HCT116 (cell line): ENCODE measurements at regions of chr5 and their contacts with region 1.

Region 1: GRCh38 chr5:35003018-35003957 is 44.5 kb downstream of the AGXT2 start:
- DNase-seq: peak; percentile 29
- ATAC-seq: peak; percentile 86
- H3K4me3 ChIP-seq: no peak overlapping the region
- H3K27ac ChIP-seq: no peak overlapping the region
- H3K4me1 ChIP-seq: no peaks in the 10 kb centered on the region; a peak in 1 of 4 replicates
- H3K27me3 ChIP-seq: 0 out of 2 replicates have a peak, but pooled peaks cover 15% of the 10 kb centered on the region
- CTCF ChIP-seq: peak; percentile 63 to 92 (median 91); a peak in 5 of 6 replicates
- POLR2A ChIP-seq: no peak
- RAD21 ChIP-seq: peak; percentile 77

Region 2: DNA sequence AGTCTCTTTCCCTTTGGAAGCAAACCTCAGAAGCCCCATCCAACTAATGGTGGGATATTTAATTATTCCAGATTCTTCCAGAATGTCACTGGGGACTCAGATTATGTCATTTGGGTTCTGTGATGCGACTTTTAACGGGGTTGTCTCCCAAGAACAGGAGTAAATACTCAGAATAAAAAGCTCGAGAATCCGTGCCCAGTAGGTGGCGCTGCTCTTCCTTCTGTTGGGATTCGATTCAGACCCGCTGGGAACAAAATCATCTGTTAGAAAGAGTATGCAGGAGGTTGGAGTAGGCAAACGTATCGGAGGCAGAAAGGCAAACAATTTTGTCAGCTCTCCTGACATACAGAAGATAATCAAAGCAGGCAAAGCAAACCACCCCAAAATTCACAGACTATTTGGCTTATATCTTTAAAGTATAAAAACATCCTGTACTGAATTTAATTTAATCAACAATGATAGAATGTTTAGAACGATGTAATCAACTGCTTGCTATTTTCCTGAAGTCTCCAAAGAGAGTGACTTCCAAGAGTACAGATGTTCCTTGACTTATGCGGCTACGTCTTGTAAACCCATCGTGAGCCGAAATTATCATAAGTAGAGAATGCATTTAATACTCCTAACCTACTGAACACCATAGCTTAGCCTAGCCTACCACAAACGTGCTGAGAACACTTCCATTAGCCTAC is 517.0 kb before region 1 on chr5:
- CTCF ChIA-PET with region 1: interaction called, 9 read pairs
- POLR2A ChIA-PET with region 1: no interaction called
- RAD21 ChIA-PET with region 1: no interaction called
- intact Hi-C with region 1: loop called (anchors 1 kb)
- DNase-seq: peak; percentile 69
- ATAC-seq: peak; percentile 88
- H3K4me3 ChIP-seq: no peak overlapping the region
- H3K27ac ChIP-seq: no peak overlapping the region
- H3K4me1 ChIP-seq: no peaks in the 10 kb centered on the region
- H3K27me3 ChIP-seq: 0 out of 2 replicates have a peak, but pooled peaks cover 6% of the 10 kb centered on the region
- CTCF ChIP-seq: peak; percentile 75 to 86 (median 78); a peak in 5 of 6 replicates
- POLR2A ChIP-seq: no peak
- RAD21 ChIP-seq: peak; percentile 89

Region 3: GRCh38 chr5:34656001-34656699 is 347.1 kb before region 1 on chr5 and contains the start of gene RAI14:
- CTCF ChIA-PET with region 1: no interaction called
- POLR2A ChIA-PET with region 1: no interaction called
- RAD21 ChIA-PET with region 1: no interaction called
- intact Hi-C with region 1: no loop called
- DNase-seq: peak; percentile 23
- ATAC-seq: peak; percentile 90
- H3K4me3 ChIP-seq: peak within 1 kb of the TSS; percentile 74 to 89
- H3K27ac ChIP-seq: peak within 1 kb of the TSS; percentile 78
- H3K4me1 ChIP-seq: peaks cover 13 to 24% of the 10 kb centered on the region in 2 experiments
- H3K27me3 ChIP-seq: no peaks in the 10 kb centered on the region; the same call in 1 of the 2 replicates
- CTCF ChIP-seq: no peak
- POLR2A ChIP-seq: no peak
- RAD21 ChIP-seq: no peak
- total RNA-seq, gene RAI14: 47.9 TPM

Region 4: GRCh38 chr5:34957857-34958690 is 45.2 kb before region 1 on chr5:
- CTCF ChIA-PET with region 1: interaction called, 18 read pairs
- POLR2A ChIA-PET with region 1: no interaction called
- RAD21 ChIA-PET with region 1: no interaction called
- intact Hi-C with region 1: loop called (anchors 2 kb)
- DNase-seq: no peak
- ATAC-seq: peak; percentile 86
- H3K4me3 ChIP-seq: no peak overlapping the region
- H3K27ac ChIP-seq: no peak overlapping the region
- H3K4me1 ChIP-seq: peaks cover 0 to 6% of the 10 kb centered on the region in 2 experiments; a peak in 2 of 4 replicates
- H3K27me3 ChIP-seq: no peaks in the 10 kb centered on the region
- CTCF ChIP-seq: peak; percentile 9 to 69 (median 63); a peak in 5 of 6 replicates
- POLR2A ChIP-seq: no peak
- RAD21 ChIP-seq: 0 out of 2 replicates have a peak, but pooled peaks have one; percentile 21